ENCODE measurements at regions of chr3 and their contacts with region 1.

Region 1: GRCh38 chr3:125662675-125663074 is 67.4 kb upstream of the OSBPL11 start:
- DNase-seq: no peak
- H3K4me3 ChIP-seq: no peak overlapping the region
- H3K4me3 Mint-ChIP-seq: no peak overlapping the region
- H3K27ac Mint-ChIP-seq: no peak overlapping the region
- H3K4me1 ChIP-seq: no peaks in the 10 kb centered on the region
- H3K4me1 Mint-ChIP-seq: no peaks in the 10 kb centered on the region
- H3K27me3 ChIP-seq: no peaks in the 10 kb centered on the region
- H3K27me3 Mint-ChIP-seq: no peaks in the 10 kb centered on the region
- CTCF ChIP-seq: no peak

Region 2: GRCh38 chr3:125644036-125645010 is 18.4 kb before region 1 on chr3:
- CTCF ChIA-PET with region 1: no interaction called
- POLR2A ChIA-PET with region 1: interaction called, 10 read pairs
- intact Hi-C with region 1: no loop called
- DNase-seq: no peak
- H3K4me3 ChIP-seq: no peak overlapping the region
- H3K4me3 Mint-ChIP-seq: no peak overlapping the region
- H3K27ac Mint-ChIP-seq: no peak overlapping the region
- H3K4me1 ChIP-seq: 0 out of 2 replicates have a peak, but pooled peaks cover 6% of the 10 kb centered on the region
- H3K4me1 Mint-ChIP-seq: no peaks in the 10 kb centered on the region
- H3K27me3 ChIP-seq: no peaks in the 10 kb centered on the region
- H3K27me3 Mint-ChIP-seq: no peaks in the 10 kb centered on the region
- CTCF ChIP-seq: no peak

Measured in Caco-2 (cell line).